ENCODE measurements at regions of chrX and their contacts with region 1.

Region 1: GRCh38 chrX:30865015-30865414 is 24.0 kb downstream of the TAB3 start:
- H3K4me3 ChIP-seq: no peak overlapping the region
- H3K27ac ChIP-seq: no peak overlapping the region
- H3K4me1 ChIP-seq: no peaks in the 10 kb centered on the region
- CTCF ChIP-seq: no peak

Region 2: GRCh38 chrX:30349946-30350345 is 515.1 kb before region 1 on chrX:
- CTCF ChIA-PET with region 1: no interaction called
- POLR2A ChIA-PET with region 1: no interaction called
- H3K4me3 ChIP-seq: no peak overlapping the region
- H3K27ac ChIP-seq: no peak overlapping the region
- H3K4me1 ChIP-seq: no peaks in the 10 kb centered on the region
- CTCF ChIP-seq: no peak

Region 3: DNA sequence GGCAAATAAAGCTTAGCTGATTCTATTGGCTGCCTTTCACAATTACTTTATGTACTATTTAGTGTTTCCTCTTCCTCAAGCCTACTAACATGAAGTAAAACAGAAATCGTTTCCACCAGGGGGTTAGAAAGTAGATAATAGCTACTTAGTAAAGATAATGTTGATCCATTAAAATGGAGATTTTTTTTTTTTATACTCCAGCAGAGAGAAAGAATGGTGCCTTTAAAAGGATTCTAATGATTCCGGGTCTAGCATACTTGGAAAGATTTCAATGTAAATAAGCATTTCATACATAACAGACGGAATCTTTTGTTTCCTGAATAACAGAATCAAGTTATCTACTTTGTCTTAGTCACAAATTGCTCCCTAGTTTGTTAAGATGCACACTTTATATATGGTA is 174.7 kb before region 1 on chrX:
- CTCF ChIA-PET with region 1: no interaction called
- POLR2A ChIA-PET with region 1: no interaction called
- H3K4me3 ChIP-seq: no peak overlapping the region
- H3K27ac ChIP-seq: no peak overlapping the region
- H3K4me1 ChIP-seq: no peaks in the 10 kb centered on the region
- CTCF ChIP-seq: no peak

Region 4: DNA sequence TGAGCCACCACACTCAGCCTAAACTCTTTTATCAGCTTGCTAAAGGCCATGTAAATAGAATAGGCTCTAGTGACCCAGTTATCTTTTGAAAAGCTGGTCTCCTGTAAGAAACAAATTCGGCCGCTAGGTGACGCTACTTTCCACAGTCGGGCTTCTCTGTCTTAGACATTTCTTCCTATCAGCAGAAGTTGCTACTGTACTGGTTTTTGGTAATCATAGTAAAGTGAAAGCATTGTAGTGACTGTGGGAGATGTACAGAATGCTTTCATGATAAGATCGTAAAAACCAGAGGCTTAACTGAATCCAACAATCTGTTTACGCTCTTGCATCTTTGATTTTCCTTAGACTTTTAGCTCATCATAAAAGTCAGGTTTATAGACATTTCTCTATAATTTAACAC is 129.2 kb before region 1 on chrX:
- CTCF ChIA-PET with region 1: interaction called, 16 read pairs
- POLR2A ChIA-PET with region 1: no interaction called
- H3K4me3 ChIP-seq: no peak overlapping the region
- H3K27ac ChIP-seq: no peak overlapping the region
- H3K4me1 ChIP-seq: no peaks in the 10 kb centered on the region
- CTCF ChIP-seq: 0 out of 2 replicates have a peak, but pooled peaks have one; percentile 26

Region 5: DNA sequence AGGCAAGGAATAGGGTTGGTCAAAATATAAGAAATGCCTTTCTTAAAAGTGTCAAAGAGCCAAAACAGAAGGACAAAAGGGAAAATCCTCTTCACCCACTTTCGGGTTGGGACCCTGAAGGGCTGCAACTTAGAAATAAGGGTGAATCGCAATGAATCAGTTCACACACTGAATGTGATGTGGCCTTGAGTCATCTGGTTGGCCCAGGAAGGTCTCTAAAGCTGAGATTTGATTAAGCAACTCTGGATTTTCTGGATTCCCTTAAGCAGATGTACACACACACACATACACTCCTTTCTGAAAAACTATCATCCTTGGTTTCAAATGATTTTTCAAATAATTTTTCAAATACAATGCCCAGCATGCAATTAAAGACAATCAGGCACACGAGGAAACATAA is 10.9 kb after region 1 on chrX:
- CTCF ChIA-PET with region 1: no interaction called
- POLR2A ChIA-PET with region 1: no interaction called
- H3K4me3 ChIP-seq: no peak overlapping the region
- H3K27ac ChIP-seq: no peak overlapping the region
- H3K4me1 ChIP-seq: no peaks in the 10 kb centered on the region
- CTCF ChIP-seq: no peak

Region 6: DNA sequence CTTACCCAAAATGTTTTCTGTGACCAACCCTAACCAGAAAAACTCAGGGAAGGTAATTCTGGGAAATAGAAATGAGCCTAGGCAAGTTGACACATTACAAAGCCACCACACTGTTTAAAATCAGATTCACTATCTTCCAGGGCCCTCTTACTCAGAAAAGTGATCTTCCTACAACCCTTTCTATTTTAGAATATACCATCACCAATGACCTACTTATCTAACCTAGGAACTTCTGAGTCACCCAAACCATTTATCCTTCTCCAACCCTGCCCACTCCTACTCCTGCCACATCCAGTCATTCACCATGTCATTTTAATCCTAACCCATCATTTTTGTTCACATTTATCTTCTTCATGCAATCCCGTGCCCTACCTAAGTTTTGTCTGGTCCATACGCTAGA is 117.0 kb after region 1 on chrX:
- CTCF ChIA-PET with region 1: no interaction called
- POLR2A ChIA-PET with region 1: no interaction called
- H3K4me3 ChIP-seq: no peak overlapping the region
- H3K27ac ChIP-seq: no peak overlapping the region
- H3K4me1 ChIP-seq: no peaks in the 10 kb centered on the region
- CTCF ChIP-seq: no peak